Dorsolateral prefrontal cortex (tissue), 120 donors: ENCODE measurements at regions of chr5 and their contacts with region 1.

Region 1: DNA sequence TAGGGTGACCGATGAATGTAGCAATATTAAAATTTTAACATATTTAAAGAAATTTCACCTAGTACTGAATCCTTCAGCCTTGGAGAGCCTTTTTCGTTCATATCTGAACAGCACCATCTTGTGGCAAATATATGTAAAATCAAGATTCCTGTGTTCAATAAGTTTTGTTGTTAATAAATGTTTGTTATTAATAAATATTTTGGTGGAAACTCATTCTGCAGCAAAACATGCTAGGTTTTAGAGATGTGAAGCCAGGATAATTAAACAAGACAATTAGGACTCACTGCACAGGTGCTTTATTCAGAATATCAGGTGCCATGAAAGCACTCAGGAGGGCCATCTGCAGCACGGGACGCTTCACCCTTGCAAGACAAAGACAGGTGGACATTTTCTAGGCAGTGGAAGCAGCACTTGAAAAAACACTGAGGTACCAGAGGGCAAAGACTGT is 15.7 kb downstream of the TICAM2 start:
- DNase-seq: no peak
- H3K4me3 ChIP-seq: no peak overlapping the region
- H3K27ac ChIP-seq: no peak overlapping the region
- H3K27me3 ChIP-seq: no peaks in the 10 kb centered on the region
- CTCF ChIP-seq: peak; percentile 63 to 91 (median 78)

Region 2: DNA sequence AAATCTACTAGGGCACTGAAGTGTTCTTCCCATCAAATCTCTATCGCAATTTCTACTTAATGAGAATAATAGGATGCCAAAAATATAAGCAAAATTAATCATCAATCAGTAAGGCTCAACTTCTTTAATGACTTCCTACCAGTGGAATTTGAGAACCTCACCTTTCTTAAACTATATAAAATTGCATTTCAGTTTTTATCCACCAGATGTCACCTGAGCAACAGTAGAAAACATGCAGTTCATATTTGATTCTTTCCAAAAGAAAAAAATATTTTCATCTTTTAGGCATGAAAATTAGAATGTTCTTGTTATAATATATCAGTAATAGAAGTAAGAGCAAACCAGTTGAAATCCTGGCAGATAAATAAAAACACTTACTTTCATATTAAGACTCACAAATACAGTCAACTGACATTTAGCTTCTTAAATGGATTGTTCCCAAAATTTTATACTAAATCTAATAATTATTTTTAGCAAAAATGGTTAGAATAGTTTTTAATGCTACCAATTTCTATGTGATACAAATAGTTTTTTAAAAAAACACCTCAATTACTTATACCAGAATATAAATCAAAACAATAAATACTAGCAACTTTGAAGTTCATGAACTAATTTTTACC is 276.8 kb before region 1 on chr5:
- intact Hi-C with region 1: loop called (anchors 2 to 5 kb)
- DNase-seq: no peak
- H3K4me3 ChIP-seq: no peak overlapping the region
- H3K27ac ChIP-seq: no peak overlapping the region
- H3K27me3 ChIP-seq: no peaks in the 10 kb centered on the region
- CTCF ChIP-seq: peak; percentile 62 to 97 (median 81)

Region 3: DNA sequence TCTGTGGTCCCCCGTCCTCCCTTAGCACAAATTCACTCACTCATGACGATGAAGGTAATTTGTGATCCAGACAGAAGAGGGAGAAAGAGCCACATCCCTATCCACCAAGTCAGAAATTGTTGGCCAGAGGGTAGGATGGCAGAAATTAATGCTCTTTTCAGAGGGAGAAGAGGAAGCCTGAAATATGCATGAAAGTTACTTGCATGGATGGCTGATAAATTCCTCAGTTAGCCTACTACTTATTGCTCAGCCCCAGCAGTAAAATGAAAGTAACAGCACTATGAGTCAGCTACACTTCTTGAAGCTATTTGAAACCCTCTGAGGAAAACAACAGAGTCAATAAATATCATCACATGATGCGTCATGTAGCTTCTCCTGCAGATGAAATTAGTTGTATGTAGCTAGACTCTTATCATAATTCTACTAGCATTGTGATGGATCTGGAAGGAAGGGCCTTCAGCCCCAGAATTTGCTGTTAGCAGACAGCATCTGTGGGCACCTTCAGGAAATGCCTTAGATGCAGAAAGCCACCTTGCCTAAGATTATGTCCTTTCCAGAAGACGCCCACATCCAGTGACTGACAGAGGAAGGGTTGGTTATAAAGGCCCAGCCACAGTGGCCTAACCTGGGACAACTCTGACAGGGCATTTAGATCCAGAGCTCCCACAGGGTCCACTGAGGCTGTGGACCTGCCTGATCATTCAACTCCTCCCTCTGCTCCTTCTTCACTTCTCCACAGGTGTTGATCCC is 209.0 kb before region 1 on chr5:
- intact Hi-C with region 1: loop called in 1 of 2 experiments (anchors 5 kb)
- DNase-seq: no peak
- H3K4me3 ChIP-seq: peak overlapping the region in 4 of 59 donors; percentile 2 to 20 (median 10)
- H3K27ac ChIP-seq: peak overlapping the region in 7 of 59 donors; percentile 1 to 63 (median 24)
- H3K27me3 ChIP-seq: no peaks in the 10 kb centered on the region
- CTCF ChIP-seq: peak in 36 of 56 donors; percentile 8 to 54 (median 30)

Region 4: GRCh38 chr5:115551415-115551814 is 35.2 kb before region 1 on chr5:
- intact Hi-C with region 1: no loop called
- DNase-seq: no peak
- H3K4me3 ChIP-seq: no peak overlapping the region
- H3K27ac ChIP-seq: no peak overlapping the region
- H3K27me3 ChIP-seq: no peaks in the 10 kb centered on the region
- CTCF ChIP-seq: no peak